Ascending aorta (tissue), 2 donors: ENCODE measurements at regions of chr20 and their contacts with region 1.

Region 1: DNA sequence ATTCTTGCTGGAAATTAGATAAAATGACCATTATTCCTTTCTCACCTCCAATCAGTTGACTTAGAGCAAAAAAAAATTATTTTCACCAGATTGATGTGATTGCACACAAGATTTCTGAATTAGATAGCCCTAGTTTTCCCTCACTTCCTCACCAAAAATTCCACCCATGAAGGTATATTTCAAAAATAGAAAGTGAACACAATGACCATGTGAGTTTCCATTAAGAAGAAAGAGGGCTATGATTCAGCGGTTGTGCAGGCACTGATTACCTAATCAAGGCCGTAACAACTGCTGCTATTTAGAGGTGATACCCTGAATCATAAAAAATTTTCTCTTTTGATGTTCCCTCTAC is 19.5 kb upstream of the RALGAPA2 start:
- DNase-seq: no peak
- H3K4me3 ChIP-seq: no peak overlapping the region
- H3K27ac ChIP-seq: peak overlapping the region; percentile 80 to 82
- H3K4me1 ChIP-seq: peaks cover 6 to 14% of the 10 kb centered on the region in 2 donors
- H3K27me3 ChIP-seq: no peaks in the 10 kb centered on the region
- CTCF ChIP-seq: no peak

Region 2: GRCh38 chr20:20712474-20713243 is 19.3 kb before region 1 on chr20 and contains the start of gene RALGAPA2:
- intact Hi-C with region 1: loop called (anchors 2 kb)
- DNase-seq: peak; percentile 92 to 99
- H3K4me3 ChIP-seq: peak within 1 kb of the TSS; percentile 93 to 96
- H3K27ac ChIP-seq: peak within 1 kb of the TSS; percentile 90 to 92
- H3K4me1 ChIP-seq: peaks cover 3 to 10% of the 10 kb centered on the region in 2 donors
- H3K27me3 ChIP-seq: no peaks in the 10 kb centered on the region
- CTCF ChIP-seq: peak in 2 of 3 experiments; percentile 13 to 21
- total RNA-seq, gene RALGAPA2: 68.9 TPM